GM12878 (cell line): ENCODE measurements at regions of chr15 and their contacts with region 1.

Region 1: DNA sequence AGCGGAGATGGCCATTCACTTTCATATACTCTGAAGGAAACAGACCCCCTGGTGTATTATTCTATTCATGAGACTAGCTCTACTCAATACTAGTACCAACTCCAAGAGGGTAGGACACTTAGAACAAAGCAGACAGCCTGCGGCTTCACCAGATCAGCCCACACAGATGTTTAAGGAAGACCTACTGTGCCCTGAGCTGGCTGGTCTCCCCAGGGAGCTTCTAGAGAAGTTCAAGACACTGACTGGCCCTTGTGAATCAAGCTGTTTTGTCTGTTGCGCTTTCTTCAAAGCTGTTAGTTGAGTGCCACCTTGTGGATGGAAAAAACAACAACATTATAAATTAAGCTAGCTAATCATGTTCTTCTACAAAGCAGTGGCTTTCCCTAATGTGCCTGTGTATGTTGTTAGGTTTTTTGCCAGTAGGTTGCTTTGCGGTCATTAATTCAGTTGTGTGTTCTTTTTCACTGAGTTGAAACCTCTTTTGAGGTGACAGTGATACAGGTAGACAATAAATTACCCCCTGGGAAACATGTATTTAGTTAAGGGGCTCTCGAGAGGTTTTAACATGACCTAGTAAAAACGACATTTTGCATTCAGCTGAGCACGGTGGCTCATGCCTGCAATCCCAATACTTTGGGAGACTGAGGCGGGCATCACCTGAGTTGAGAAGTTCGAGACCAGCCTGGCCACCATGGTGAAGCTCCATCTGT is 64.2 kb upstream of the MYZAP start:
- DNase-seq: peak; percentile 46
- ATAC-seq: peak; percentile 93
- H3K4me3 ChIP-seq: no peak overlapping the region
- H3K27ac ChIP-seq: no peak overlapping the region
- H3K4me1 ChIP-seq: no peaks in the 10 kb centered on the region
- H3K27me3 ChIP-seq: no peaks in the 10 kb centered on the region; a peak in 1 of 4 replicates
- CTCF ChIP-seq: peak; percentile 34 to 74 (median 38); a peak in 5 of 6 replicates
- EP300 ChIP-seq: no peak
- POLR2A ChIP-seq: no peak
- RAD21 ChIP-seq: peak; percentile 75

Region 2: DNA sequence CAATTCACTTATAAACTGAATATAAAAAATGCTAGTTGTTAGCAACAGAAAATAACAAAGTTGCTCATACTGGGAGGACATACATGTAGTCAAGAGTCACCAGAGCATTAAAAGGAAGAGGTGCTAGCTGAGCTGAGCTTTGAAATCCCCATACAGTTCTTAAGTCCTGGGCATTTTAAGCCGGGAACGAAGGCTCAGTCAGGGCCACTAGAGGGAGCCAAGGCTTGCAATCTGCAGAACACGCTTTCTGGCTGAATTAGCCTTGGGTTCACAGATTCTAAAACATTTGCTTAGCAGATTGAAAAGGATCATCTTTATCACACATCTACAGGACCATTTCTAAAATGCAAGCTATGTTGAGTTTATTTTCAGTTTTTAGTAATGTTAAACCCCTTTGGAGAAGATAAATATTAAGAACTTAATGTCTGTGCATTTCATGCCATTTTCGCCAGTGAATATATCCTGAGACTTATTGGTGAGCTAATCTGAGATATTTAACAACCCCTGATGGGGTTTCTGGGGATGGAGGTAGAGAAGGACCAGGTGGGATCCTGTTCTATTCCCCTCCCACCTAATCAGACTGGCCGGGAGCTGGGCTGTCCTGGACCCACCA is 1036.3 kb before region 1 on chr15:
- CTCF ChIA-PET with region 1: interaction called, 11 read pairs
- POLR2A ChIA-PET with region 1: no interaction called
- RAD21 ChIA-PET with region 1: interaction called, 12 read pairs
- SMC1A ChIA-PET with region 1: interaction called, 7 read pairs
- in situ Hi-C with region 1: loop called (anchors 10 kb)
- intact Hi-C with region 1: loop called (anchors 1 kb)
- DNase-seq: peak; percentile 28
- ATAC-seq: peak; percentile 94
- H3K4me3 ChIP-seq: no peak overlapping the region
- H3K27ac ChIP-seq: no peak overlapping the region
- H3K4me1 ChIP-seq: no peaks in the 10 kb centered on the region
- H3K27me3 ChIP-seq: no peaks in the 10 kb centered on the region
- CTCF ChIP-seq: peak; percentile 89 to 94 (median 92)
- EP300 ChIP-seq: no peak
- POLR2A ChIP-seq: no peak
- RAD21 ChIP-seq: peak; percentile 86

Region 3: DNA sequence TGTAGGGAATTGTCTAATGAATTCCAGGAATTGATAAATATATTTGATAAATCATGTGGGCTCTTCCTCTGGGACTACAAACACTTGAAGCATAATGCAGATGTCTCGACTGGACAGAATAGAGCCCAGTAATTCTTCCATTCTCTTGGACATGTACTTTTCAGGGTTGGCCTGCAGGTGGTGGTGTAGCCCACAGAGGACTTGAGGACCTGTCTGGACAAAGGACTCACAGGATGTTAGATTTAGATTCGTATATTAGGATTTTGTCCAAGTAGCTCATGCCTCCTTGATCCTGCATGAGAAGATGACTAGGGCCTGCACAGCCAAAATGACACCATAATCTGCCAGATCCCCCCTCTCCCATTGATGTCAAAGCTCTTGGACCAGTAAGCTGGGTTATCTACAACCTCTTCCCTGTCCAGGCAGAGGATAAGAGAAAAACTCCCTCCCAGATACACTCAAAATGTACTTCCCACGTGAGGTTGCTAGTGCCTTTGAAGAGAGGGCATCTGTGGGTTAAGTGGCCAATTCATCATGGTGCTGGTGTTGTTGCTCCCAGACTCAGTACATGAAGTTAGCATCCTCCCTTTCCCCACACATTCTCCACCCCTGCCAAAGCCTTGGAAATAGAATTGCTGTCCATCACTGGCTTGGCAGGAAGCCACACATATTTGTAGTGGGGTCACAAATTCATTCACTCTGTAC is 705.7 kb before region 1 on chr15:
- CTCF ChIA-PET with region 1: interaction called, 11 read pairs
- POLR2A ChIA-PET with region 1: no interaction called
- RAD21 ChIA-PET with region 1: interaction called, 6 read pairs
- SMC1A ChIA-PET with region 1: interaction called, 4 read pairs
- in situ Hi-C with region 1: loop called (anchors 25 kb)
- intact Hi-C with region 1: loop called (anchors 2 kb)
- DNase-seq: no peak
- ATAC-seq: peak; percentile 98
- H3K4me3 ChIP-seq: no peak overlapping the region
- H3K27ac ChIP-seq: no peak overlapping the region
- H3K4me1 ChIP-seq: no peaks in the 10 kb centered on the region
- H3K27me3 ChIP-seq: no peaks in the 10 kb centered on the region; a peak in 1 of 4 replicates
- CTCF ChIP-seq: peak; percentile 65 to 67 (median 66)
- EP300 ChIP-seq: no peak
- POLR2A ChIP-seq: no peak
- RAD21 ChIP-seq: peak; percentile 88

Region 4: GRCh38 chr15:57340682-57341259 is 186.8 kb before region 1 on chr15:
- CTCF ChIA-PET with region 1: interaction called, 242 read pairs
- POLR2A ChIA-PET with region 1: no interaction called
- RAD21 ChIA-PET with region 1: interaction called, 156 read pairs
- SMC1A ChIA-PET with region 1: interaction called, 83 read pairs
- in situ Hi-C with region 1: loop called (anchors 5 kb)
- intact Hi-C with region 1: loop called (anchors 1 kb)
- DNase-seq: peak; percentile 15
- ATAC-seq: peak; percentile 84
- H3K4me3 ChIP-seq: no peak overlapping the region
- H3K27ac ChIP-seq: no peak overlapping the region
- H3K4me1 ChIP-seq: no peaks in the 10 kb centered on the region
- H3K27me3 ChIP-seq: peaks cover 0 to 2% of the 10 kb centered on the region in 2 experiments; a peak in 2 of 4 replicates
- CTCF ChIP-seq: peak; percentile 71 to 88 (median 75)
- EP300 ChIP-seq: no peak
- POLR2A ChIP-seq: no peak
- RAD21 ChIP-seq: peak; percentile 91

Region 5: GRCh38 chr15:57516327-57517031 is 11.1 kb before region 1 on chr15:
- CTCF ChIA-PET with region 1: interaction called, 13 read pairs
- POLR2A ChIA-PET with region 1: no interaction called
- RAD21 ChIA-PET with region 1: interaction called, 5 read pairs
- SMC1A ChIA-PET with region 1: interaction called, 11 read pairs
- in situ Hi-C with region 1: no loop called
- intact Hi-C with region 1: no loop called
- DNase-seq: no peak
- ATAC-seq: no peak
- H3K4me3 ChIP-seq: no peak overlapping the region
- H3K27ac ChIP-seq: no peak overlapping the region
- H3K4me1 ChIP-seq: no peaks in the 10 kb centered on the region
- H3K27me3 ChIP-seq: no peaks in the 10 kb centered on the region
- CTCF ChIP-seq: no peak
- EP300 ChIP-seq: no peak
- POLR2A ChIP-seq: no peak
- RAD21 ChIP-seq: no peak

Region 6: DNA sequence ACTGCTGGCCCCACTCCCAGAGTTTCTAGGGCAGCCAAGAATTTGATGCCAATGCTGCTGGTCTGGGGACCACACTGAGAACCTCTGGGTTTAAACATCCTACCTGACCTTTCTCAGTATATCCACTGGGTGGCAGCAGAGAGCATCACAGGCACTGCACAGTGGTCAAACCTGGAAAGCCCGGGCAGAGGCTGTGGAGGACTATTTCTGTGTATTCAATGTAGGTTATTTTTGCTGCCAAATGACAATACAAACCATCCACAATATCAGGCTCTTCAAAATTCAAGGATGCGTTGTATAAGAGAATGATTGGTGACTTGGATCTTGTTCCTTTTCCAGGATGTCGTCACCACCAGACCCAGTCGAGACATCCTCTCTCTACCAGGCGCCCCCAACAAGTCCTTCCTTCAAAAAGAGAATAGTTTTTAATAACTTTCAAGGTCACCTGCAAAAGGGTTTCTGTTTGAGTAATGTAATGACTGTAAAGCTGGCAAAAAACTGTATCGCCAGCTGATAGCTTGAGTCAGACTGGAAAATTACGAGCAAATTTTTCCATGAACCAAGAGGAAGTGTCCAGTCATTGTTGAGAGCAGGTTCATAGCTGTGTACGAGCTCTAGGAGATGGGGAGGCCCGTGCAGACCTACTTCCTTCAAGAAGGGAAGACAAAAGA is 33.6 kb after region 1 on chr15:
- CTCF ChIA-PET with region 1: interaction called, 15 read pairs
- POLR2A ChIA-PET with region 1: no interaction called
- RAD21 ChIA-PET with region 1: interaction called, 3 read pairs
- SMC1A ChIA-PET with region 1: no interaction called
- in situ Hi-C with region 1: no loop called
- intact Hi-C with region 1: no loop called
- DNase-seq: peak; percentile 26
- ATAC-seq: peak; percentile 95
- H3K4me3 ChIP-seq: no peak overlapping the region
- H3K27ac ChIP-seq: no peak overlapping the region
- H3K4me1 ChIP-seq: peaks cover 3% of the 10 kb centered on the region; the same call in 1 of the 2 replicates
- H3K27me3 ChIP-seq: no peaks in the 10 kb centered on the region
- CTCF ChIP-seq: peak; percentile 82 to 86 (median 83)
- EP300 ChIP-seq: no peak
- POLR2A ChIP-seq: no peak
- RAD21 ChIP-seq: peak; percentile 66

Region 7: GRCh38 chr15:57580866-57581265 is 53.3 kb after region 1 on chr15:
- CTCF ChIA-PET with region 1: no interaction called
- POLR2A ChIA-PET with region 1: no interaction called
- RAD21 ChIA-PET with region 1: no interaction called
- SMC1A ChIA-PET with region 1: no interaction called
- in situ Hi-C with region 1: no loop called
- intact Hi-C with region 1: no loop called
- DNase-seq: no peak
- ATAC-seq: no peak
- H3K4me3 ChIP-seq: no peak overlapping the region
- H3K27ac ChIP-seq: no peak overlapping the region
- H3K4me1 ChIP-seq: no peaks in the 10 kb centered on the region
- H3K27me3 ChIP-seq: no peaks in the 10 kb centered on the region
- CTCF ChIP-seq: no peak
- EP300 ChIP-seq: no peak
- POLR2A ChIP-seq: no peak
- RAD21 ChIP-seq: no peak